Calu3 (cell line): ENCODE measurements at regions of chr5 and their contacts with region 1.

Region 1: DNA sequence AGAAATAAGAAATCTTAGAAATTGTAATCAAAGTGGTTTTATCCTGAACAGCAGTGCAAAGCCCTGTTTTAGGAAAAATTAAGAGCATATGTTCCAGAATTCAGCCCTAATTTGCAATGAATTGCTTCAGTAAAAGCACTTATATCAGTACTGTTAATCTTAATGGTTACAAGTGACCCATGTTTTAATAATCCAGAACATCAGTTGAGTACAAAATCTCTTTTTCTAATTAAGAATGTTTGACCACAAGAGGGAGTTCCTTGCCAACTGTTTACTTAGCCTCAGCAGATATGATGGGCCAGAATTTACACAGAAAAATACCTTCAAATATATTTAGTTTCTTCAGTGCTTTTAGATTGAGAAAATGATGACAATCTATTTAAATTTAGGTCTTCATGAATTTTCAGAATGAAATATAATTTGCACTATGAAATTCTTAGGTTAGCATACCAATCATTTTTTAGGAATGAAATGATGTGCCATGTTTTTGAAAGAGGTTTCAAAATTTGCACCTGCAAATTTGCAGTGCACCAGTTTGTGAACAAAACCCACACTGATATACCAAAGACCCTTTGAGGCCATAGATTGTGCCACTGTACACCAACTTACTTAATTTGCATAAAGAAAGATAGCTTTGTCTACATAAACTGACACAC is 926.3 kb upstream of the ARRDC3 start:
- DNase-seq: no peak
- H3K4me3 Mint-ChIP-seq: no peak overlapping the region
- H3K27ac Mint-ChIP-seq: no peak overlapping the region
- H3K4me1 Mint-ChIP-seq: peaks cover 8% of the 10 kb centered on the region
- H3K27me3 Mint-ChIP-seq: no peaks in the 10 kb centered on the region
- CTCF ChIP-seq: peak; percentile 31

Region 2: DNA sequence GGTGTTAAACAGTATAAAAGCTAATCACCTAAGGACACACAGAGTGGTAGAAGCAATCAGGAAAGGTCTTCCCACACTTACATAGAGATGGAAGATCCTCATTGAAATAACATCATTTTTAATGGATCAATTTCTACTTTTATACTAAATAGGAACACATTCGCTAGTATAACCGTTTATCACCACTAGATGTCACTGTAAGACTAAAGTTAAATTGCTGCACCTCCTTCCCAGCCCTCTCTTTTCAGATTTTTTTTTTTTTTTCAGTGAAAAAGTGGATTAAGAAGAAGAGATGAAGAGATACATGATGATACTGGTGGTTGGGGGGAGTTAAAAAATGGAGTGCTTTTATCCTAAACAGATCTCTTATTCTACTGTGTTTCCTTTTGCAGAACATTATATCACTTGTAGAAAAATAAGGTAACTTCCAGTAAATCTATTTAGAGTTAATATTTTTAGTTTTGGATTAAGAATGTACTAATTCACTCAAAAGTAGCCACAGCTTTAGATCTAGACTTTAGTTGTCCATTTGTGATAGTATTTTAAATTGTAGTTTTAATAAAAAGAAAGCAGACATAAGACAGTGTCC is 809.4 kb before region 1 on chr5:
- CTCF ChIA-PET with region 1: no interaction called
- intact Hi-C with region 1: loop called (anchors 5 kb)
- DNase-seq: peak; percentile 7
- H3K4me3 Mint-ChIP-seq: no peak overlapping the region
- H3K27ac Mint-ChIP-seq: no peak overlapping the region
- H3K4me1 Mint-ChIP-seq: no peaks in the 10 kb centered on the region
- H3K27me3 Mint-ChIP-seq: no peaks in the 10 kb centered on the region
- CTCF ChIP-seq: peak; percentile 65

Region 3: DNA sequence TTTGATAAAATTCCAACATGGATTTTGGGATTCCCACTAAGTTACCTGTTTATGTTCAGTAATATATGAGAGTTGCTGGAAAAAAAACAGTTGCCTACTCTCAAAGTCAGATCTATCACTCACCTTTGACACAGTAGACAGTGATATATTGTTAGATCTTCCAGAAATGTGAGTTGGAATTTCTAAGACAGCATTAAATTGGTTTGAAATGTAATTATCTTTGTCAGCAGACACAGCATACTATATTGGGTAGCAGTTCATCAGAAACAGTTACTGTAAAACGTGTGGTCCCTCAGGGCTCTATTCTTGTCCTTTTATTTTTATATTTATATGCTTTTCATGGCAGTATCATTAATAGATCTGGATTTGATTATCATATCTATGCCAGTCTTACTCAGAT is 492.8 kb before region 1 on chr5:
- CTCF ChIA-PET with region 1: no interaction called
- intact Hi-C with region 1: no loop called
- DNase-seq: no peak
- H3K4me3 Mint-ChIP-seq: no peak overlapping the region
- H3K27ac Mint-ChIP-seq: no peak overlapping the region
- H3K4me1 Mint-ChIP-seq: no peaks in the 10 kb centered on the region
- H3K27me3 Mint-ChIP-seq: no peaks in the 10 kb centered on the region
- CTCF ChIP-seq: no peak

Region 4: DNA sequence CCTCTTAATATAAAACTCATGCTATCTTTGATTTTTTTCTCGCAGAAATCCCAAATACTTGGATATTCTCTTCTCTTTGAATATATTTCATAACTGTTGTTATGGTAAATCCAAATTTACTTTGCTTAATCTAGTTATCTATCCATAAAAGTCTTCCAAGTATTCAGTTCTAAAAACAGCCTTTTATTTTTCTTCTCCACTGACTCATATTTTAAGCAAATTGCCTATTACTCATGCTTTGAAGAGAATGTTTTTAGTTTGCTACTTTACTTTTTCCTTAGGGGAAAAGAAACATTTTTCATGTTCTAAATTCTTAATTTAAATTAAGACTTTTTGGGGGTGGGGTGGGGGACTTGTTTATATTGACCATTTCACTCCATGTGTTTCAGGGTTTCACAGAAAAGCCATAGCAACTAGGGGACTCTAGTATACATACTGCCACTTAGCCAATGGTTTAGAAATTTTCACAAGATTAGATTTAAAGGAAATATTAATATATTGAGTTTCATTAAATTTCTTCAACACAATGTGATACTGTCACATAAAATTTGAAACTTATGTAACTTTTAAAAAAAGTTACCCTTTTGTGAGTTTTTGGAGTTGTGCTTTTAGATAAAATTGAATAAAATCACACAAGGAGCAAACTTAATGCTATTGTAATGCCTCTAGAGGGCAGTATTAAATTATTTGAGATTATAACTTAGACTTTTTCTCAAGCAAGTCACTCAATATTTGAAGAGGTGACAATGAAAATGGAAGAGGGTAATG is 380.5 kb before region 1 on chr5:
- CTCF ChIA-PET with region 1: no interaction called
- intact Hi-C with region 1: loop called (anchors 2 kb)
- DNase-seq: no peak
- H3K4me3 Mint-ChIP-seq: no peak overlapping the region
- H3K27ac Mint-ChIP-seq: no peak overlapping the region
- H3K4me1 Mint-ChIP-seq: no peaks in the 10 kb centered on the region
- H3K27me3 Mint-ChIP-seq: no peaks in the 10 kb centered on the region
- CTCF ChIP-seq: peak; percentile 39

Region 5: DNA sequence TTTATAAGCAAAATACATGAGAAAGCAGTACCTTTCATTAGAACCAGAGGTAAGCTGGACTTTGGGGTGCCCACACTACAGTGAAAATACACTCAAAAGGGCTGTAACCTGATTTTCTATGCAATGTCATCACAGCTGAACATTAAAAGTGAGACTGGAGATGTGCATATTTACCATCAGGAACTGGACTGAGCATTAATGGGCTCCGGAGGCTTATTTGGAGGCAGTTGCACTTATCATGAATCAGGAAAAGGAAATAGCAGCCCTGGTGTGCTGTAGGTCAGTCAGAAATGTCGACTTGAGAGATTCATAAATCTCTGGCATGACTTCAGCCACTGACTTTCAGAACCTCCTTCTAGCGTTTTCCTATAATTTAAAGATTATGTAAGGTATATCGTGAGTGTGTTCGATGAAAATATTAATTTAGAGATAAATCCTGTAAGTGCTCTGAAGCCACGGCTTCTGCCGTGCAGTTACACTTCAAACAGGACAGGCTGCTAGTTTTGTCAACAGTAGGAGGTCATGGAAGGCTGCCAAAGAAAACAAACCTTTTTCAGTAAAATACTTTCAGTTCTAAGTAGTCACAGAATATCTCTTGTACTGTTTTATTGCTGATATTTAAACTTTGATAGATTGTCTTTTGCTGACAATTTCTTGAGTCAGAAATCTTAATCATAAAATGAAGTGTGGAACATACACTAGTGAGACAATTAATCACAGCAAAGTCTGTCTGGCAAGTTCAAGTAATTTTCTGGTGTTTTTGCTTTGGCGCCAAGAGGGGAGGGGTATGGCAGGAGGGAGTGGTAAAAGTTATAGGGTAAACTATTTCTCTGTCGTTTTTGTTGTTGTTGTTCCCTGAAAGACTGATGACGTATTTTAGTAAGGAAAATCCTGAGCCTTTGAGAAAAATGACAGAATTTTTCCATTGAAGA is 331.8 kb after region 1 on chr5:
- CTCF ChIA-PET with region 1: no interaction called
- intact Hi-C with region 1: loop called (anchors 5 kb)
- DNase-seq: peak; percentile 51
- H3K4me3 Mint-ChIP-seq: peak overlapping the region; percentile 68
- H3K27ac Mint-ChIP-seq: peak overlapping the region; percentile 67
- H3K4me1 Mint-ChIP-seq: peaks cover 12% of the 10 kb centered on the region
- H3K27me3 Mint-ChIP-seq: no peaks in the 10 kb centered on the region
- CTCF ChIP-seq: no peak

Region 6: DNA sequence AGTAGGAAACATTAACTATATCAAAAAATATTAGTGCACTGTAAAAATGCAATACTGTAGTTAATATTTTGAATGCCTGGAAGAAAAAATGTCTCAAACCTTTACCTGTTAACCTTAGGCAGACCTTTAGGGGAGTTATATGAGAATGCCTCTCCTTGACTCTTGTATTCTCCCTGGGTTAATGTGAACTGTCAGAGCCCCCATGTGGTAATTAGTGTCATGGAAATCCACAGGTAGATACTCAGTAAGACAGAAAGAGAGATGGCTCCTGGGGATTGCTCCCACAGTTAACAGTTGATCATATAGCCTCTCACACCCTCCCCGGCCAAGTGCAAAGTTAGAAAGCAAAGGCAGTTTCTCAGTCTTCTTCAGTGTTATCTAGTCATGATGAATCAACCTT is 528.8 kb after region 1 on chr5:
- CTCF ChIA-PET with region 1: no interaction called
- intact Hi-C with region 1: loop called (anchors 1 kb)
- DNase-seq: peak; percentile 28
- H3K4me3 Mint-ChIP-seq: no peak overlapping the region
- H3K27ac Mint-ChIP-seq: no peak overlapping the region
- H3K4me1 Mint-ChIP-seq: peaks cover 2% of the 10 kb centered on the region
- H3K27me3 Mint-ChIP-seq: no peaks in the 10 kb centered on the region
- CTCF ChIP-seq: no peak

Region 7: GRCh38 chr5:93915142-93915553 is 1605.7 kb after region 1 on chr5:
- CTCF ChIA-PET with region 1: no interaction called
- intact Hi-C with region 1: loop called (anchors 10 kb)
- DNase-seq: no peak
- H3K4me3 Mint-ChIP-seq: no peak overlapping the region
- H3K27ac Mint-ChIP-seq: no peak overlapping the region
- H3K4me1 Mint-ChIP-seq: no peaks in the 10 kb centered on the region
- H3K27me3 Mint-ChIP-seq: no peaks in the 10 kb centered on the region
- CTCF ChIP-seq: peak; percentile 57